ENCODE measurements at regions of chr14 and their contacts with region 1.

Region 1: GRCh38 chr14:51979088-51979709 is 10.1 kb upstream of the RTRAF start:
- DNase-seq: peak; percentile 68
- ATAC-seq: peak; percentile 75
- H3K4me3 Mint-ChIP-seq: no peak overlapping the region
- H3K27ac Mint-ChIP-seq: no peak overlapping the region
- H3K4me1 Mint-ChIP-seq: peaks cover 6% of the 10 kb centered on the region
- H3K27me3 Mint-ChIP-seq: no peaks in the 10 kb centered on the region
- CTCF ChIP-seq: peak; percentile 37

Region 2: DNA sequence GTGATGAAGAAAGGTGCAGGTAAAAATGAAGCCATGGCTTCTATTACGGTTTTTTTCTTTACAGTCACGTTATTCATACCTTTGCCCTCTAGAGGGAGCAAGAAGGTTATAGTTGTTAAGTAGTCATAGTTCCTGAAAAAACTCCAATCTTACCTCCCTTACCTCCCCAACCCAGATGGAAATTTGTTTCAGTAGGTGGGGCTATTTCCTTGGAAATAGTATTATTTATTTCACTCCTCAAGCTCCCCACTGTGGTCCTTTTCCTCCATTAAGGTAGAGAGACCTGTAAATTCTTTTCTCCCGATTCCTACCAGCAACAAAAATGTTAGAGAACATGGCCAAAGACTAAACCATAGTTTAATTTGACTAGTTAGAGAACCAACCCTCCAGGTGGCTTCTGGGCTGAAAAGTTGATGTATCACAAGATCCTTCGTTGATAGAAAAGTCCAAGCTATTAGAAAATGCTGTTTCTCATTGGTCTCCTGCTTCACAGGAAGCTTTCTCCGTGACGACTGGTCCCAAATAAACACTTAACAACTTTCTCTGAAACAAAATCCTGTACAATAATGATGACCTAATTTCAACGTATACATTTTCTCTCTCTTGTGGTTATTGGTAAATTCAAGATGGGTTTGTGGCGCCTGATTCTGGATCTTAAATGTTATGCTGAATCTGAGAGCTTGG is 695.7 kb before region 1 on chr14:
- CTCF ChIA-PET with region 1: interaction called, 31 read pairs
- POLR2A ChIA-PET with region 1: no interaction called
- intact Hi-C with region 1: loop called (anchors 1 kb)
- DNase-seq: no peak
- ATAC-seq: peak; percentile 52
- H3K4me3 Mint-ChIP-seq: no peak overlapping the region
- H3K27ac Mint-ChIP-seq: no peak overlapping the region
- H3K4me1 Mint-ChIP-seq: peaks cover 9% of the 10 kb centered on the region
- H3K27me3 Mint-ChIP-seq: no peaks in the 10 kb centered on the region
- CTCF ChIP-seq: peak; percentile 88

Region 3: DNA sequence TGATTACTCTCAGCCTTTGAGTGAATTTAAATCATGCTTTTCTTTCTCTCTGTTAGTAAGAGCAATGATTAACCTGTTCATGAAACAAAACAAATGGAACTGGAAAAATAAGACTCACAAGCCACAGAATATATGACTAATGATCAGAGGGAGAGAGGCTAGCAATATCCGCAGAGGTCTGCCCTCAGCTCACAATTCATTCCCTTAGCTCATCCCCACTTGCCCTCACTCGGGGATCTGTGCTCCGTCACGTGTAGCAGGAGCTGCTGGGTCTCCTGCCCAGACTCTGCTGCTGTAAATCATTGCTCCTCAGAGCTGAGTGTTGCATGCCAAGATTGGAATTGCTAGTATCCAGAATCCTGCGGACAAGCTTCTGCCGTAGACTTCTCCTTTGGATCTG is 171.8 kb before region 1 on chr14:
- CTCF ChIA-PET with region 1: interaction called, 11 read pairs
- POLR2A ChIA-PET with region 1: no interaction called
- intact Hi-C with region 1: no loop called
- DNase-seq: no peak
- ATAC-seq: no peak
- H3K4me3 Mint-ChIP-seq: no peak overlapping the region
- H3K27ac Mint-ChIP-seq: no peak overlapping the region
- H3K4me1 Mint-ChIP-seq: no peaks in the 10 kb centered on the region
- H3K27me3 Mint-ChIP-seq: peaks cover 2% of the 10 kb centered on the region
- CTCF ChIP-seq: no peak

Region 4: DNA sequence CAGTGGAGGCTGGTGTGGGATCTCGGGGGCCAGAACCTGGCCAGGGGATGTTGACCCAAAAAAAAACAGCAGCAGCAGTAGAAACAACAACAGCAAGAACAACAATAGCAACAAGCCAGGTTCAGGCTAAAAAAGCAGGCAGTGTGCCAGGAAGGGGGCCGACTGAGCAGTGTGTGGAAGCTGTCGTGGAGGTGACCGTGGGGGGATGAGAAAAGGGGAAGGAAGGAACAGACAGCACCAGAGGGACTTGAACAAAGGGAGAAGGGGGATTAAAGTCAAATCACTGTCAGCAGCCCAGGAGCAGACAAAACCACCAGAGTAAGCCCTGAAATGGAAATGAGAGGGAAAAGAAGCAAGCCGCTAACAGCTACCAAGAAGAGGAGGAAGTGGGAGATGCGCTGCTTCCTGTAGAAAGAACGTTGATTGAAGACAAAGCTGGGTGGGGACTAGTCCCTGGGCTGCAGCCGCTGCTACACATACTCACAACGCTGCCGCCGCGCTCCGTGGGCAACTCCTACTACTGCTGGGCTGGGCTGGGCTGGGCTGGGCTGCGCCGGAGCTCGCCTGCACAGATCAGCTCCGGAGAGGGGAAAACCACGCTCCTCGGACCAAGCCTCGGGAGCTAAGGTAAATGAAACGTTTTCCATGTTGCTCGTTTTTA is 118.9 kb before region 1 on chr14 and contains the start of gene GNG2:
- CTCF ChIA-PET with region 1: interaction called, 11 read pairs
- POLR2A ChIA-PET with region 1: no interaction called
- intact Hi-C with region 1: loop called (anchors 5 kb)
- DNase-seq: peak; percentile 58
- ATAC-seq: peak; percentile 95
- H3K4me3 Mint-ChIP-seq: peak within 1 kb of the TSS; percentile 95
- H3K27ac Mint-ChIP-seq: peak within 1 kb of the TSS; percentile 88
- H3K4me1 Mint-ChIP-seq: peaks cover 70% of the 10 kb centered on the region
- H3K27me3 Mint-ChIP-seq: no peaks in the 10 kb centered on the region
- CTCF ChIP-seq: no peak
- total RNA-seq, gene GNG2: 68.7 and 70.0 TPM in 2 replicates

Region 5: DNA sequence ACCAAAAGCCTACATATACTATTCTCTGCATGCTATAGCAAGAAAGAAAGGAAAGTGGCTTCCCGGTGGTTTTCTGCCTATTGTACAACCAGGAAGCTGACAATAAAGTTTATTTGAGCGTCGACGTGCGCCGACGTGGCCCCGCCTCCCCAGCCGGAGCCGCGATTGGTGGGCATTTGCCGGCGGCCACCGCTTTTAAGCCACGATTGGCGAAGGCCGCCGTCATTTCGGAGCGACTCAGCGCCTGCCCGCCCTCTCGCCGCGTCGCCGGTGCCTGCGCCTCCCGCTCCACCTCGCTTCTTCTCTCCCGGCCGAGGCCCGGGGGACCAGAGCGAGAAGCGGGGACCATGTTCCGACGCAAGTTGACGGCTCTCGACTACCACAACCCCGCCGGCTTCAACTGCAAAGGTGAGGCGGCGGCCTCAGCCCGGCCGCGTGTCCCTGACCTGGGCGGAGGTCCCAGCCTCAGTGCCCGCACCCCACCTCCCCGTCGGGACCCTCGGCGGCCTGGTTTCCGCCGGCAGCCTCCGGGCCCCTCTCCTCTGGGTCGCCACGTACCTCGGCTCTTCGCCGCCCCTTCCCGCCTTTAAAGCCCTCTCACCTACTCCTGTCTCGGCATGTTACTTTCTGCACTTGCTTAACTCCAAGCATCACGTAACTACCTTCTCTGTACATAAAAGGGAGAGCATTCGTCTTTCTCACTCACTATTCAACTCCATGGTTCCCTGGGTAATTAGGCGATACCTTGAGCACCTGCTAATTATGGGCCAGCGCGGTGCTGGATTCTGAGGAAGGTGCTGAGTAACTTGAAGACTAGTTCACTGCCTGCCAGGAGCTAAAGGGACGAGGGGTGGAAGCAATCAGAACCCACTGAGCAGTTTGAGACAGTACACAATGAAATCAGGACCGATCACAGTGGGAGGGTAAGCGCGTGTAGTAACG is 10.4 kb after region 1 on chr14 and contains the start of gene RTRAF:
- CTCF ChIA-PET with region 1: interaction called, 10 read pairs
- POLR2A ChIA-PET with region 1: no interaction called
- intact Hi-C with region 1: no loop called
- DNase-seq: peak; percentile 86
- ATAC-seq: peak; percentile 97
- H3K4me3 Mint-ChIP-seq: peak within 1 kb of the TSS; percentile 98
- H3K27ac Mint-ChIP-seq: peak within 1 kb of the TSS; percentile 93
- H3K4me1 Mint-ChIP-seq: peaks cover 37% of the 10 kb centered on the region
- H3K27me3 Mint-ChIP-seq: no peaks in the 10 kb centered on the region
- CTCF ChIP-seq: no peak
- total RNA-seq, gene RTRAF: 160 and 163 TPM in 2 replicates